Activated CD4-positive, alpha-beta memory T cell treated with anti-CD3 and anti-CD28 coated beads for 36 hours (primary cell): ENCODE measurements at regions of chr7 and their contacts with region 1.

Region 1: GRCh38 chr7:43700059-43700501 is 29.2 kb downstream of the COA1 start:
- DNase-seq: no peak
- H3K4me3 Mint-ChIP-seq: no peak overlapping the region
- H3K27ac Mint-ChIP-seq: no peak overlapping the region
- H3K4me1 Mint-ChIP-seq: peaks cover 57% of the 10 kb centered on the region
- H3K27me3 Mint-ChIP-seq: no peaks in the 10 kb centered on the region

Region 2: GRCh38 chr7:43604251-43604650 is 95.8 kb before region 1 on chr7:
- CTCF ChIA-PET with region 1: interaction called, 26 read pairs
- POLR2A ChIA-PET with region 1: no interaction called
- intact Hi-C with region 1: no loop called
- DNase-seq: no peak
- H3K4me3 Mint-ChIP-seq: no peak overlapping the region
- H3K27ac Mint-ChIP-seq: no peak overlapping the region
- H3K4me1 Mint-ChIP-seq: peaks cover 44% of the 10 kb centered on the region
- H3K27me3 Mint-ChIP-seq: no peaks in the 10 kb centered on the region

Region 3: GRCh38 chr7:43625453-43625852 is 74.6 kb before region 1 on chr7:
- CTCF ChIA-PET with region 1: interaction called, 17 read pairs
- POLR2A ChIA-PET with region 1: interaction called, 6 read pairs
- intact Hi-C with region 1: loop called (anchors 2 kb)
- DNase-seq: peak; percentile 67
- H3K4me3 Mint-ChIP-seq: no peak overlapping the region
- H3K27ac Mint-ChIP-seq: peak overlapping the region; percentile 54
- H3K4me1 Mint-ChIP-seq: peaks cover 84% of the 10 kb centered on the region
- H3K27me3 Mint-ChIP-seq: no peaks in the 10 kb centered on the region

Region 4: DNA sequence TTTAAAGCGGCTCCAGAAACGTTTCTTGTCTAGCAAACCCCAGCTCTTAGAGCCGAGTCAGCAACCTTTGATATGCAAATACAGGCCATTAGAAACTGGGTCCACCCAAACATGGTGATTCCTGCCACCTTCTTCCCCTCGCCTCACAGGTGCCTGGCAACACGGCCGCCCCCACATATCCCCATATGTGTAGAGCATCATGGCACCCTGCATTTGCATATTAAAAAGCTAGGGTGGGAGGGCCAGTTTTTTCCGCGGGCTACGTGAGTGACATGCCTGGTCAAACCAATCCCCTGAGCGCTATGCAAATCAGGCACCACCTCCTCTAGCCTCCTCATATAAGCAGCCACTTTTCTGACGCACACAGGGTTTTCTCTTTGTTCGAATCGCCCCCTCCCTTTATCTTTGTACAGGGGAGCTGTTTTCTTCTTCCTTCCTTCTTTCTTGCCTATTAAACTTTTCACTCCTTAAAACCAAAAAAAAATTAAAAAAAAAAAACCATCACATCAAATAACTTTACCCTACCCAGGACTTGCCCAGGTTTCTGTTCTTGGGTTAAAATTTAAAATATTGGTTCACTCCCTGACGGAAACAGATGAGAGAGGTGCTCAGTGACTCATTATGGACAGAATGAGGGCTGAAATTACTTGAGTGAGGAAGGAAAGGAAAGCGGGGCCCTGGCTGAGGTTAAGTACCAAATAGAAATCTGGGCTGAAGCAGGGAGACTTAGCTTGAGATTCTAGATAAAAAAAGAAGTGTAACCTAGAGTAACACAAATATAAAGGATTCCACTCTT is 30.6 kb before region 1 on chr7:
- CTCF ChIA-PET with region 1: interaction called, 13 read pairs
- POLR2A ChIA-PET with region 1: interaction called, 6 read pairs
- intact Hi-C with region 1: no loop called
- DNase-seq: peak; percentile 96
- H3K4me3 Mint-ChIP-seq: peak overlapping the region; percentile 78
- H3K27ac Mint-ChIP-seq: peak overlapping the region; percentile 96
- H3K4me1 Mint-ChIP-seq: peaks cover 78% of the 10 kb centered on the region
- H3K27me3 Mint-ChIP-seq: no peaks in the 10 kb centered on the region

Region 5: DNA sequence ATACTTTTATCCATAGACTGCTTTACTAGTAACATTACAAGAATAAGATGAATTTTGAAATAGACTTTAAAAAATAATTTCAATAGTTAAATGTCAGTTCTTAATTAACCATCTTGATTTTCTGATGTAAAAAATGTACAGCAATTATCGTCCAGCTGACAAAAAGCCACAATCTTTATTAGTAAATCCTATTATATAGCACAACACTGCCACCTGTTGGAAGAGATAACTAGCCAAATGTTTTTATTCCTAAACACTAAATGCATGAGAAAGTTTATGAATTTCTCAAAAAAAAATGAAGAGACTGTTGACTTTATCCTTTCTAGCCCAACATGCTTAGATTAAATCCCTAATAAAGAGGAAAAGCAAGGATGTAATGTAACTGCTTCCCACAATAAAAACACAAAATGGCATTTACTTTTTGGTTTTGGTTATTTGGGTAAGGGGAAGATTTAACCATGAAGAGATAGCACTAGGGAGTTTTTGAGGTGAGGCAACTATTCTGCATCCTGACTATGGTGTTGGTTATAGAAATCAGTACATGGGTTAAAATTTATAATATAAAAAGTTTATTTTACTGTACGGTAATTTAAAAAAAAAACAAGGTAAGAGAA is 21.2 kb after region 1 on chr7:
- CTCF ChIA-PET with region 1: interaction called, 15 read pairs
- POLR2A ChIA-PET with region 1: no interaction called
- intact Hi-C with region 1: loop called (anchors 1 kb)
- DNase-seq: no peak
- H3K4me3 Mint-ChIP-seq: no peak overlapping the region
- H3K27ac Mint-ChIP-seq: no peak overlapping the region
- H3K4me1 Mint-ChIP-seq: peaks cover 40% of the 10 kb centered on the region
- H3K27me3 Mint-ChIP-seq: no peaks in the 10 kb centered on the region

Region 6: DNA sequence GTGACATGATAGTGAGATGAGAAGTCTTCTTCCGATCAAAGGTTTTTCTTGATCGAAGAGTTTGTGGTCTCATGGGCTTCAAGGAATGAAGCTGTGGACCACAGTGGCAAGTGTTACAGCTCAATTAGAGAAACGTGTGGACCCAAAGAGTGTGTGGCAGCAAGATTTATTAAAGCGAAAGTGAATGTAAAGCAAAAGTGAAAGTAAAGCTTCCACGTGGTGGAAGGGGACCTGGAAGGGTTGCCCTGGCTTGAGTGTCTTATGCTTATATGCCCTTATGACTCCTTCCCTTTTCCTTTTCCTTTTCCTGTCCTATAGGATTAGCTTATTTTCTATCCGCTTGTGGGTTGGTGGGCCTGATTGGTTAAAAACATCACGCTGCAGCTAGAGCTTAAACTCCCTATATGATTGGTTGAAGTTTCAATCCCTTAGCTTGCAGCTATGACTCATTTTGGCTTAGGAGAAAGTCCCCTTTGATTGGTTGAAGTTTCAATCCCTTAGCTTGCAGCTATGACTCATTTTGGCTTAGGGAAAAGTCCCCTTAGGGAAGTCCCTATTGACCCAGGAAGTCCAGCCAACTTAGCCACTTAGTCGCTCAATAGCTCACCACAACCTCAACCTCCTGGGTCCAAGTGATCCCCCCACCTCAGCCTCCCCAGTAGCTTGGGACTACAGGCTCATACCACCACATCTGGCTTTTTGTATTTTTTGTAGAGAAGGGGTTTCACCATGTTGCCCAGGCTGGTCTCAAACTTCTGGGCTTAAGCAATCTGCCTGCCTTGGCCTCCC is 134.6 kb after region 1 on chr7:
- CTCF ChIA-PET with region 1: interaction called, 75 read pairs
- POLR2A ChIA-PET with region 1: no interaction called
- intact Hi-C with region 1: no loop called
- DNase-seq: peak; percentile 64
- H3K4me3 Mint-ChIP-seq: peak overlapping the region; percentile 77
- H3K27ac Mint-ChIP-seq: peak overlapping the region; percentile 65
- H3K4me1 Mint-ChIP-seq: peaks cover 31% of the 10 kb centered on the region
- H3K27me3 Mint-ChIP-seq: no peaks in the 10 kb centered on the region